Breast epithelium (tissue), 4 donors: ENCODE measurements at regions of chr9 and their contacts with region 1.

Region 1: DNA sequence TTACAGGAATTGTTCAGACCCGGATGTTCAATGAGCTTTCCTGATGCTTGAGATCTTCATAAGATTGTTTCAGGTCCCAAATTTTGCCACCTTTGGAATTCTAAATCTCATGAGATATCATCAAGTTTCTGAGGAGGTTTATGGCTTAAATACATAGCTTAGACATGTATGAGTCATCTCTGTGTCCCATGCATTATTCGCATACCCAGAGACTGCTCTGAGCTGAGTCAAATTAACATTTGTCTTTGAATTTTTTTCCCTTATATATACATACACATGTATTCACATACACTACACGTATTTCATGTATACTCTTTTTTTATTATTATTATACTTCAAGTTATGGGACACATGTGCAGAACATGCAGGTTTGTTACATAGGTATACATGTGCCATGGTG is 744.6 kb downstream of the BRINP1 start:
- DNase-seq: no peak
- H3K4me3 ChIP-seq: no peak overlapping the region
- H3K27ac ChIP-seq: no peak overlapping the region
- H3K4me1 ChIP-seq: no peaks in the 10 kb centered on the region
- H3K27me3 ChIP-seq: no peaks in the 10 kb centered on the region
- CTCF ChIP-seq: no peak
- POLR2A ChIP-seq: no peak

Region 2: DNA sequence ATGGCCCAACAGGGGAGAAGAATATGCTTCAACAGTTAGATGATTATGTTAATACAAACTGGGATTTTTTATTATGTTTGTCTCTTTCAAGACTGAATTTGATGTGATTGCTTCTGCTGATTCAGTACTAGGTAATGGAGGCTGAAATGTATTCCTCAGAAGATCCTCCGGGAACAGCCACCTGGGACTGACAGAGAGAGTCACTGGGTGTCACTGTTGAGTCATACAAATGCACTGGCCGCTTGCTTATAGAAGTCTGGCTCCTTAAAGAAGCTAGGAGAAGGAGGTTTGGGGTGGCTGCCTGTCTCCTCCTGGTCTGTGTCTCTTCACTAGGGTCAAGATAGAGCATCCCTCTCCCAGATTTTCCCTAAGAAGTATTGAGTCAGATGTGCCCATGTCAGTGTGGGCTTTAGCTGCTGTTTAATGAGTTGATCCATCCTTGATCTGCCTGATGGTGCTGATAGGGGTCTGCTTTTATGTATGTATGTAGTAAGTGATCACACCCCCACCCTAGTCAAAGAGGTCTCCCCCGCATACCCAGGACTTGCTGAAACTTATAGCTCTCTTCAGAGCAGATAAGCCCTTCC is 28.8 kb before region 1 on chr9:
- intact Hi-C with region 1: no loop called
- DNase-seq: peak in 1 of 2 donors; percentile 28
- H3K4me3 ChIP-seq: no peak overlapping the region
- H3K27ac ChIP-seq: no peak overlapping the region
- H3K4me1 ChIP-seq: no peaks in the 10 kb centered on the region
- H3K27me3 ChIP-seq: no peaks in the 10 kb centered on the region
- CTCF ChIP-seq: peak in 1 of 3 donors; percentile 41
- POLR2A ChIP-seq: no peak

Region 3: DNA sequence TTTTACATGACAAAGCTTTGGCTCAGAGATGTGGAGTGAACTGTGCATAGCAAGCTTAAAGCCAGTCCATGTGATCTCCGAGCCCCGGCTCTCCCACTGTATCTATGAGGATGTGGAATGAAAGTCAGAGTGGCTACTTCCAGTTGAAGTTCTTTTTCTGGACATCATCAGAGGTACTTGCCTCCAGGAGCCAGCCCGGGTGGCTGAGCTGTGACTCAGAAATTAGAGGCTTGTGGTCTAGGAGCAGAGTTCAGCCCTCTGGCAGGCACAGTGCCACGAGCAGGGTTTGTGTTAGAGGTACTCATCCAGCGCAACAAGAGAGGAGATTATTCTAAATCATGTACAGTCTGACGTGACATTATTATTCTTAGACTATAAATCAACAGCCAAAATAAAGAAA is 1632.9 kb after region 1 on chr9:
- intact Hi-C with region 1: loop called (anchors 5 kb)
- DNase-seq: no peak
- H3K4me3 ChIP-seq: no peak overlapping the region
- H3K27ac ChIP-seq: no peak overlapping the region
- H3K4me1 ChIP-seq: no peaks in the 10 kb centered on the region
- H3K27me3 ChIP-seq: peaks cover 0 to 3% of the 10 kb centered on the region in 2 donors
- CTCF ChIP-seq: no peak
- POLR2A ChIP-seq: no peak